Activated CD8-positive, alpha-beta T cell treated with anti-CD3 and anti-CD28 coated beads, Interleukin-2, amount 10 ng/mL, durations not matched to agents 7 days and 5 days (primary cell): ENCODE measurements at regions of chr2 and their contacts with region 1.

Region 1: GRCh38 chr2:96801005-96801785 is 14.9 kb upstream of the CNNM3 start:
- DNase-seq: peak; percentile 76
- ATAC-seq: peak; percentile 94
- H3K4me3 Mint-ChIP-seq: no peak overlapping the region
- H3K27ac Mint-ChIP-seq: no peak overlapping the region
- H3K4me1 Mint-ChIP-seq: peaks cover 2% of the 10 kb centered on the region
- H3K27me3 Mint-ChIP-seq: no peaks in the 10 kb centered on the region

Region 2: DNA sequence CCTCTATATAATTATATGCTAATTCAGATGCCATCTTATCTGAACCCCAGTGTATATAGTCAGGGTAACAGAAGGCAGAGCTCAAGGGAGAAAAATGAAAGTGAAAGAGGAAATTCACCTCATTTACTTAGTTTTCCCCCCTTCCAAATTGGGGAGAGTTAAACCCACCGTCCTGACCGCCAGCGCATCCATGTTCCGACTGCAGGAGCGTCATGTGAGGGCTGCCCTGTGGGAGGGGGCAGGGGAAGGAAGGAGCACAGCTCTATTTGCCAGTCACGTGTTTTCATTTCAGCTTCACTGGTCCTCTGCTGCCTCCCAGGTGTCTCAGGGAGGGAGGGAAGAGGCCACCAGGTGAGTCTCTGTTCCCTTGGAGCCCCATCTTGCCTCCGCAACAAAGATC is 27.3 kb before region 1 on chr2:
- CTCF ChIA-PET with region 1: interaction called, 17 read pairs
- POLR2A ChIA-PET with region 1: no interaction called
- DNase-seq: peak; percentile 67
- ATAC-seq: peak; percentile 85
- H3K4me3 Mint-ChIP-seq: peak overlapping the region; percentile 74
- H3K27ac Mint-ChIP-seq: peak overlapping the region; percentile 80
- H3K4me1 Mint-ChIP-seq: peaks cover 22% of the 10 kb centered on the region
- H3K27me3 Mint-ChIP-seq: no peaks in the 10 kb centered on the region

Region 3: DNA sequence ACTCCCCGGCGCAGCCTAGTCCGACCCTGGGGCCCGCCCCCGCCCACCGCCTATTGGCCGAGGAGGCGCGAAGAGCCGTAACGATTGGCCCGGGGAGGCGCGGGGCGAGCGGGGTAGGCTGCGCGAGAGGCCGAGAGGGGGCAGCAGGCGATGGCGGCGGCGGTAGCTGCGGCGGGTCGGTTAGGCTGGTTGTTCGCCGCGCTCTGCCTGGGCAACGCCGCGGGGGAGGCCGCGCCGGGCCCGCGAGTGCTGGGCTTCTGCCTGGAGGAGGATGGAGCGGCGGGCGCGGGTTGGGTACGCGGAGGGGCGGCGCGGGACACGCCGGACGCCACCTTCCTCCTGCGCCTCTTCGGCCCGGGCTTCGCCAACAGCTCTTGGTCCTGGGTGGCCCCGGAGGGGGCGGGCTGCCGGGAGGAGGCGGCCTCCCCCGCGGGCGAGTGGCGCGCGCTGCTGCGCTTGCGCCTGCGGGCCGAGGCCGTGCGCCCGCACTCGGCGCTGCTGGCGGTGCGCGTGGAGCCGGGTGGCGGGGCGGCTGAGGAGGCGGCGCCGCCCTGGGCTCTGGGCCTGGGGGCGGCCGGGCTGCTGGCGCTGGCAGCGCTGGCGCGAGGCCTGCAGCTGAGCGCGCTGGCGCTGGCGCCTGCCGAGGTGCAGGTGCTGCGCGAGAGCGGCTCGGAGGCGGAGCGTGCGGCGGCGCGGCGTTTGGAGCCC is 15.1 kb after region 1 on chr2 and contains the start of gene CNNM3:
- CTCF ChIA-PET with region 1: interaction called, 13 read pairs
- POLR2A ChIA-PET with region 1: interaction called, 4 read pairs
- DNase-seq: peak; percentile 96
- ATAC-seq: peak; percentile 95
- H3K4me3 Mint-ChIP-seq: peak within 1 kb of the TSS; percentile 89
- H3K27ac Mint-ChIP-seq: peak within 1 kb of the TSS; percentile 71
- H3K4me1 Mint-ChIP-seq: peaks cover 53% of the 10 kb centered on the region
- H3K27me3 Mint-ChIP-seq: no peaks in the 10 kb centered on the region
- total RNA-seq, gene CNNM3: 28.1 to 29.9 TPM

Region 4: DNA sequence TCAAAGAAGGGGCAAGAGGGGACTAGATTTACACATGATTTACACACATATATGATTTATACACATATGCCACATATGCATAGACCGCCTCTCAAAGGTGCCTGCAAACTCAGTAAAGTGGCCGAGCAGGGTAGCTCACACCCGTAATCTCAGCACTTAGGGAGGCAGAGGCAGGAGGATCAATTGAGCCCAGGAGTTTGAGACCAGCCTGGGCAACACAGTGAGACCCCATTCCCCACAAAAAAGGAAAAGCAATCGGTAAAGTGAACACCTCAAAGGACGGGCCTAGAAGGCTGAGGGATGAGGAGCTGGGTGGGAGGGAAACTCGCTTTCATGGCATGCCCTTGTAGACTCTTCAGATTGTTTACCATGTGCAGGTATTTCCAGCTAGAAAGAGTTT is 51.5 kb after region 1 on chr2:
- CTCF ChIA-PET with region 1: no interaction called
- POLR2A ChIA-PET with region 1: no interaction called
- DNase-seq: no peak
- ATAC-seq: no peak
- H3K4me3 Mint-ChIP-seq: no peak overlapping the region
- H3K27ac Mint-ChIP-seq: no peak overlapping the region
- H3K4me1 Mint-ChIP-seq: peaks cover 20% of the 10 kb centered on the region
- H3K27me3 Mint-ChIP-seq: no peaks in the 10 kb centered on the region